PC-3 (cell line): ENCODE measurements at regions of chr3 and their contacts with region 1.

Region 1: GRCh38 chr3:180601688-180602666 is at the start of gene TTC14:
- DNase-seq: peak; percentile 96
- ATAC-seq: peak; percentile 96
- H3K4me3 ChIP-seq: peak within 1 kb of the TSS; percentile 90
- H3K27ac ChIP-seq: peak within 1 kb of the TSS; percentile 62
- H3K4me1 ChIP-seq: peaks cover 13% of the 10 kb centered on the region
- H3K27me3 ChIP-seq: no peaks in the 10 kb centered on the region
- CTCF ChIP-seq: peak; percentile 25; the same call in 1 of the 2 replicates
- total RNA-seq, gene TTC14: 17.2 and 18.0 TPM in 2 replicates

Region 2: GRCh38 chr3:179811321-179812095 is 790.5 kb before region 1 on chr3:
- CTCF ChIA-PET with region 1: no interaction called
- POLR2A ChIA-PET with region 1: interaction called, 11 read pairs
- intact Hi-C with region 1: no loop called
- DNase-seq: peak; percentile 88
- ATAC-seq: peak; percentile 81
- H3K4me3 ChIP-seq: no peak overlapping the region
- H3K27ac ChIP-seq: peak overlapping the region; percentile 77
- H3K4me1 ChIP-seq: peaks cover 13% of the 10 kb centered on the region; the same call in 1 of the 2 replicates
- H3K27me3 ChIP-seq: no peaks in the 10 kb centered on the region
- CTCF ChIP-seq: peak; percentile 93

Region 3: DNA sequence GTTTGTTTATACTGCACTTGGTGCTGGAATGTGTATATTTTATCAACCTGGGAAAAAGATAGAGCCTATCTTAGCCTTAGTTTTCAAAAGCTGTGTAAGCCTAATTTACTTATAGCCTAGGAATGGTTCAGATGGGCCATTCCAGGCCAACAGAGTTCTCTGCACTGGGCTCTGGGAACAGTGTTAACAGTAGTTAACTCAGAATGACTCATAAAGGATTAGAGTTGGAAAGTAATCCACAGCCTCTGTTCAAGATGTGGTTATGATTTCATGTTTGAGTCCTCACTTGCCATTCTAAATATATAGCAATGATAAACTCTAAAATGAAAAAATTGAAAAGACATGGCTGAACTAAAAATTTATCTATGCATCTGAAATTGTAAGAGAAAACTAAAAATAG is 542.6 kb before region 1 on chr3:
- CTCF ChIA-PET with region 1: no interaction called
- POLR2A ChIA-PET with region 1: no interaction called
- intact Hi-C with region 1: loop called (anchors 5 kb)
- DNase-seq: peak; percentile 61
- ATAC-seq: peak; percentile 70
- H3K4me3 ChIP-seq: no peak overlapping the region
- H3K27ac ChIP-seq: no peak overlapping the region
- H3K4me1 ChIP-seq: peaks cover 11% of the 10 kb centered on the region
- H3K27me3 ChIP-seq: no peaks in the 10 kb centered on the region
- CTCF ChIP-seq: no peak

Region 4: DNA sequence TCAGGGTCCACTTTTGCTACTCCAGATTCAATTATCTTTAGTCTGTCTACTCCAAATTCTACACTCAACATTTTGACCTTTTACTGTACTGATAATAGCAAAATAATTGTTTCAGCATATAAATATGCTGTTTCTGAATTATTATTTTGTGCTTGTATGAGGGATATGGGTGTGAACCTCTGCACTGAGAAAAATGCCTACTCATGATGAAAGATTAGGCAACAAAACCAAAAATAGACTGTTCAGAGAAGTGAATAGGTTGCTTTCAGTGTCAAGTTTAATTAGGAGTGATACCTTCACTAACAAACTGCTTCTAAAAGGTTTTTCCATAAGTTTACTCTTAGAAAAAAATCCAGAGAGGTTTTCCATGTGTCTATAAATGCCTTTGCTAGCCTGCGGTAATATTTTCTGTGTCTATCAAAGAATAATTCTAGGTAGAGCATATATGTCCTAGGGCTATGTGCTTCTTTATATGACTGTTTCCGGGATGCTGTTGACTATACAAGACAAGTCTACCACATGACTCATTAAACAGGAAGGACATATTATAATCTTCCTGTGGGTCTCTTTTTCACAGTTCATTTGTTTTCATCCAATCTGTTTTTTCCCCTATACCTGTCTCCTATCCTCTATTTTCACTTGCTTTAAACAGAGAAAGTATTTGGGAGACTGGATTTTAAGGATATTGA is 218.5 kb before region 1 on chr3:
- CTCF ChIA-PET with region 1: no interaction called
- POLR2A ChIA-PET with region 1: no interaction called
- intact Hi-C with region 1: no loop called
- DNase-seq: peak; percentile 75
- ATAC-seq: peak; percentile 90
- H3K4me3 ChIP-seq: no peak overlapping the region
- H3K27ac ChIP-seq: peak overlapping the region; percentile 69
- H3K4me1 ChIP-seq: peaks cover 32% of the 10 kb centered on the region
- H3K27me3 ChIP-seq: no peaks in the 10 kb centered on the region
- CTCF ChIP-seq: no peak

Region 5: GRCh38 chr3:180466401-180467011 is 135.5 kb before region 1 on chr3:
- CTCF ChIA-PET with region 1: no interaction called
- POLR2A ChIA-PET with region 1: no interaction called
- intact Hi-C with region 1: no loop called
- DNase-seq: no peak
- ATAC-seq: no peak
- H3K4me3 ChIP-seq: no peak overlapping the region
- H3K27ac ChIP-seq: no peak overlapping the region
- H3K4me1 ChIP-seq: 0 out of 2 replicates have a peak, but pooled peaks cover 4% of the 10 kb centered on the region
- H3K27me3 ChIP-seq: no peaks in the 10 kb centered on the region
- CTCF ChIP-seq: no peak

Region 6: DNA sequence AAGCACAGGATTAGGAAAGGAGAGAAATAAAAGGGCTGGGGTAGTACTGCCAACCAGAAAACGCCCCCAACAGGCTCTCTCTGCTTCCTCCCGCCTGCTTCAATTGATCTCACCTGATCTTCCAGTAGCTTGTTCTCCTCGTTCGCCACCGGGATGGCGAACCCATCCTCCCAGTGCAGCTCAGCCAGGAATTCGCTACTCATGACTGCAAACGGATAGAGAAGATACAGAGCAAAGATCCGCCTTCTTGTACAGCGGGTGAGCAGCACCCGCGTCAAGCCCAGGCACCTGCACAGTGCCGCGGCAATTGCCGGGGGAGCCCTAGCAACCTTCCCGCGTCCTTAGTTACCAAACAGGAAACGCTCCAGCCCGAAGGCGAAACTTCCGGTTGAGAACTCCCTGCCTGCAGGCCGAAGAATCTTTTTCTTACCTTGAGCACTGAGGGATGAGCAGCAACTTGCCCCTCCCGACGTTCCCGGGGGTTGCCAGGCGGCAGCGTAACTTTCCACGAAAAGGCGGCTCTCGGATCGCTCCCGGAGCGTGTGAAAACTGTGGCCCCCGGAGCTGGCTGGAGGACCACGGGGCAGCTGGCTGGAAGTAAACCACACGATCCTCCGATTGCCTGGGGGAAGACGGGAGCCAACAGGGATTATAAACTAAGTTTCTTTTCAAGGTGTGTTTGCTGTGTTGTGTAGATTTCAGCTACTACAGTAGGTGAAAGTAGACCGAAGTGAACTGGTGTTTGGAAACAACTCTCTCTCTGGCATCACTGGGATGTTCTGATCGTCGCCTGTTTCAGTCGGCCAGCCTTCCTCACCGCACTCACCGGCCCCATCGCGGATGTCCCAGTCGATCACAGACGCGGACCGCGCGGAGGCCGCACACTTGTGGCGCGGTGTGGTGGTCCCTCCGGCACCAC is 77.5 kb after region 1 on chr3 and contains the start of gene CCDC39:
- CTCF ChIA-PET with region 1: no interaction called
- POLR2A ChIA-PET with region 1: no interaction called
- intact Hi-C with region 1: loop called (anchors 2 kb)
- DNase-seq: peak; percentile 88
- ATAC-seq: peak; percentile 87
- H3K4me3 ChIP-seq: peak within 1 kb of the TSS; percentile 86
- H3K27ac ChIP-seq: no peak within 1 kb of the TSS
- H3K4me1 ChIP-seq: peaks cover 6% of the 10 kb centered on the region; the same call in 1 of the 2 replicates
- H3K27me3 ChIP-seq: peaks cover 17% of the 10 kb centered on the region
- CTCF ChIP-seq: no peak
- total RNA-seq, gene CCDC39: 0.04 TPM in 1 of 2 replicates, not detected in the other